Activated naive CD4-positive, alpha-beta T cell treated with anti-CD3 and anti-CD28 coated beads, Interleukin-2, amount 10 ng/mL, durations not matched to agents 7 days and 5 days (primary cell): ENCODE measurements at regions of chr5 and their contacts with region 1.

Region 1: GRCh38 chr5:35651002-35651756 is 33.5 kb downstream of the SPEF2 start:
- DNase-seq: peak; percentile 78
- H3K4me3 Mint-ChIP-seq: no peak overlapping the region
- H3K27ac Mint-ChIP-seq: no peak overlapping the region
- H3K4me1 Mint-ChIP-seq: no peaks in the 10 kb centered on the region
- H3K27me3 Mint-ChIP-seq: no peaks in the 10 kb centered on the region

Region 2: GRCh38 chr5:35166043-35166442 is 485.1 kb before region 1 on chr5:
- CTCF ChIA-PET with region 1: no interaction called
- DNase-seq: no peak
- H3K4me3 Mint-ChIP-seq: no peak overlapping the region
- H3K27ac Mint-ChIP-seq: no peak overlapping the region
- H3K4me1 Mint-ChIP-seq: no peaks in the 10 kb centered on the region
- H3K27me3 Mint-ChIP-seq: no peaks in the 10 kb centered on the region

Region 3: DNA sequence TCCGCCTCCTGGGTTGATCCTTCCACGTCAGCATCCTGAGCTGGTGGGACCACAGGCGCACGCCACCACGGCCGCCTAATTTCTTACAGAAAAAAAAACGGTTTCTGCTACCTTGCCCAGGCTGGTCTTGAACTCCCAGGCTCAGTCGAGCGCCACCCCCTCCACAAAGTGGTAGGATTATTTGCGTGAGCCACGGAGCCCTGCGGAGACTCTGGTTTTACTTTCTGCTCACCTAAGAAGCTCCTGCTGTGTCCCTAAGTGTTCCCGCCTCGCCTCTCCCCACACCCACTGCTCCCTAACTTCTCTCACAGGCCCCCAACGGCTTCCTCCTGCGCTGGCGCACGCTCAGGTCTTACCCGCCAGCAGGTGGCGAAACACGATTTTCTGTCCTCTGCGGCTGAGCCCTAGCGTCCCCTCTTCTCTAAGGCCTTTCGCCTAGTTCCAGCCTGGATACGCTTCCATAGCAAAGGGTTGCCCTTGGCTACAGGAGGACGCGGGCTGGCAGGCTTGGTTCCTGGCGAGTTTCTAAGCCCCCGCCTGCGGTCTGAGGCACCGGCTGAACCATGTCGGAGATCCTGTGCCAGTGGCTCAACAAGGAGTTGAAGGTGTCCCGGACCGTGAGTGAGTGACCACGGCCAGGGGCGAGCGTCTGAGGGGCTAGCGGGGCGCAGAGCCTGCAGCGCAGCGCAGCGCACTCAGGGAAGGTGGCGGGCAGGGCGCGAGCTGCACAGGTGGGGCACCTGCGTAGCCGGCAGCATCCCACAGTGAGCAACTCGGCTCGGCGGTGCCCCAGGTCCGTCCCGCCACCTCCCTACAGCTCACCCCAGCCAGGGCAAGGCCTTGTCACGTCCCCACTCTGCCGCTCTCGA is 33.5 kb before region 1 on chr5 and contains the start of gene SPEF2:
- CTCF ChIA-PET with region 1: interaction called, 11 read pairs
- DNase-seq: peak; percentile 84
- H3K4me3 Mint-ChIP-seq: peak within 1 kb of the TSS; percentile 92
- H3K27ac Mint-ChIP-seq: peak within 1 kb of the TSS; percentile 90
- H3K4me1 Mint-ChIP-seq: peaks cover 27% of the 10 kb centered on the region
- H3K27me3 Mint-ChIP-seq: peaks cover 7% of the 10 kb centered on the region

Region 4: DNA sequence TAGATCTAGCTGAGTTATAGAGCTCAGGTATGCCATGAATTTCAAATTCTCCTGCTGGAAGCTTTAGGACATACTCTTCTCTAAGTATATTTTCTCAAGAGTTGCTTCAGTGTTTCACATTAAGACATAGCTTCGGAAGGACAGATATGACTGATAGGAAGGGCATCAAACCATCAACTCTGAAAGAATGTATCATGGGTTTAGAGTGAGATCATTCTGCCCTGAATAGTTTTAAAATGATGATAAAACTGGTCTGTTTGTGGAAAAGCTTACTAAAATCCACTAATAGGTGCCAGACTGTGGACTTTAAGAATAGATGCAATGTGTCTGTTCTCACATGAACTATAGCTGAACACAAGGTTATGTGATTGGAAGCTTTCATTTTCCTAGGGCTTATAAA is 25.1 kb before region 1 on chr5:
- CTCF ChIA-PET with region 1: interaction called, 15 read pairs
- DNase-seq: no peak
- H3K4me3 Mint-ChIP-seq: no peak overlapping the region
- H3K27ac Mint-ChIP-seq: no peak overlapping the region
- H3K4me1 Mint-ChIP-seq: peaks cover 4% of the 10 kb centered on the region
- H3K27me3 Mint-ChIP-seq: no peaks in the 10 kb centered on the region

Region 5: GRCh38 chr5:35671541-35672295 is 20.5 kb after region 1 on chr5:
- CTCF ChIA-PET with region 1: interaction called, 17 read pairs
- DNase-seq: no peak
- H3K4me3 Mint-ChIP-seq: peak overlapping the region; percentile 17
- H3K27ac Mint-ChIP-seq: peak overlapping the region; percentile 77
- H3K4me1 Mint-ChIP-seq: peaks cover 60% of the 10 kb centered on the region
- H3K27me3 Mint-ChIP-seq: no peaks in the 10 kb centered on the region

Region 6: DNA sequence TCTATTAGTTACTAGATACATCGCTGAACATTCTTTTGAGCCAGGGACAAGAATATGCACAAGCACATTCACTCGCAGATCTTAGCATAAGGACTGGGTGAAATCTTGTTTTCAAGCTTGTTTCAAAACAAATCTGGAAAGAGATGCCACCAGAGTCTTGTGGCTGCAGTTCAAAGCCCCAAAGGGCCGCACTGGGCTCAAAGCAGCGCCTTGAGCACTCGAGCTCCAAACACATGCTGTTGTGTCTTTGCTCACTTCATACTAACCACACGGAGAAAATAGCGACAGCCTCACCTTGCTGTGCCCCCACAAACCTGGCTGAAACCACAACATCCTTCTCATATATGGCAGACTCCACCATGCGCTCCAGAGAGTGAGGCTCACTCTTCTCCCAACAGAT is 171.3 kb after region 1 on chr5:
- CTCF ChIA-PET with region 1: interaction called, 25 read pairs
- DNase-seq: peak; percentile 78
- H3K4me3 Mint-ChIP-seq: peak overlapping the region; percentile 39
- H3K27ac Mint-ChIP-seq: peak overlapping the region; percentile 86
- H3K4me1 Mint-ChIP-seq: peaks cover 88% of the 10 kb centered on the region
- H3K27me3 Mint-ChIP-seq: no peaks in the 10 kb centered on the region